Aorta (tissue), 5 donors: ENCODE measurements at regions of chr20 and their contacts with region 1.

Region 1: GRCh38 chr20:20259533-20259932 is 108.4 kb upstream of the INSM1 start:
- DNase-seq: no peak
- ATAC-seq: no peak
- H3K4me3 ChIP-seq: no peak overlapping the region
- H3K27ac ChIP-seq: no peak overlapping the region
- H3K4me1 ChIP-seq: no peaks in the 10 kb centered on the region
- H3K27me3 ChIP-seq: no peaks in the 10 kb centered on the region

Region 2: GRCh38 chr20:20317195-20317594 is 57.7 kb after region 1 on chr20:
- intact Hi-C with region 1: loop called in 1 of 2 experiments (anchors 10 kb)
- DNase-seq: no peak
- ATAC-seq: no peak
- H3K4me3 ChIP-seq: no peak overlapping the region
- H3K27ac ChIP-seq: no peak overlapping the region
- H3K4me1 ChIP-seq: no peaks in the 10 kb centered on the region
- H3K27me3 ChIP-seq: no peaks in the 10 kb centered on the region